PC-3 (cell line): ENCODE measurements at regions of chr6 and their contacts with region 1.

Region 1: DNA sequence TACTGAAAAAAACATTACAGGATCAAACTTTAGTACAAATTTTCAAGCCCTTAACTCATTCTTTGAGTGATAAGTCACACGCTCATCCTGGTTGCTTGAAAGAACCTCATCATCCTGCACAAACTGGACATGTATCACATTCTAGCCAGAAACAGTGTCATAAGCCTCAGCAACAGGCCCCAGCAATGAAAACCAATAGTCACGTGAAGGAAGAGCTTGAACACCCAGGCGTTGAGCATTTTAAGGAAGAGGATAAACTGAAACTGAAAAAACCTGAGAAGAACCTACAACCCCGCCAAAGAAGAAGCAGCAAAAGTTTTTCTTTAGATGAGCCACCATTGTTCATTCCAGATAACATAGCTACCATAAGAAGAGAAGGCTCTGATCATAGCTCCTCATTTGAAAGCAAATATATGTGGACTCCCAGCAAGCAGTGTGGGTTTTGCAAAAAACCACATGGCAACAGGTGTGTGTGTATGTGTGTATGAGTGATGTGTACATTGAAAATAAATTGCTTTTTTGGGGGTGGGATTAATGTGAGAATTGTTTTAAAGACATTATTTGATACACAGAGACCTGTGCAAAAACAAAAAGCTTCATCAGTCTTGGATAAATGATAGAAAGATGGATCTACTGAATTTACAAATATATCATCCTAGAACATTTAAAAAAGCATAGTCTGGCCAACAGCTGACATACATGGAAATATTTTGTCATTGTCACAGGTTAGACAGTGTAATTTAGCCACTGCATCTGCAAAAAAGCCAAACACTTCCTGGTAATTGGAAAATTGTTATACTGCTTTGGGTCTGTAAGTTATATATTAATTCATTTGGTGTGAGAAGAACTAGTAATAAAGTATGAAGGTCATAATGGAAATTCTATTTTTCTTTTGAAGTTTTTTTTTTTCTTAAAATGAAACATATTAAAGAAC is 50.1 kb downstream of the PHF3 start:
- DNase-seq: no peak
- ATAC-seq: no peak
- H3K4me3 ChIP-seq: no peak overlapping the region
- H3K27ac ChIP-seq: no peak overlapping the region
- H3K4me1 ChIP-seq: no peaks in the 10 kb centered on the region
- H3K27me3 ChIP-seq: no peaks in the 10 kb centered on the region
- CTCF ChIP-seq: no peak

Region 2: DNA sequence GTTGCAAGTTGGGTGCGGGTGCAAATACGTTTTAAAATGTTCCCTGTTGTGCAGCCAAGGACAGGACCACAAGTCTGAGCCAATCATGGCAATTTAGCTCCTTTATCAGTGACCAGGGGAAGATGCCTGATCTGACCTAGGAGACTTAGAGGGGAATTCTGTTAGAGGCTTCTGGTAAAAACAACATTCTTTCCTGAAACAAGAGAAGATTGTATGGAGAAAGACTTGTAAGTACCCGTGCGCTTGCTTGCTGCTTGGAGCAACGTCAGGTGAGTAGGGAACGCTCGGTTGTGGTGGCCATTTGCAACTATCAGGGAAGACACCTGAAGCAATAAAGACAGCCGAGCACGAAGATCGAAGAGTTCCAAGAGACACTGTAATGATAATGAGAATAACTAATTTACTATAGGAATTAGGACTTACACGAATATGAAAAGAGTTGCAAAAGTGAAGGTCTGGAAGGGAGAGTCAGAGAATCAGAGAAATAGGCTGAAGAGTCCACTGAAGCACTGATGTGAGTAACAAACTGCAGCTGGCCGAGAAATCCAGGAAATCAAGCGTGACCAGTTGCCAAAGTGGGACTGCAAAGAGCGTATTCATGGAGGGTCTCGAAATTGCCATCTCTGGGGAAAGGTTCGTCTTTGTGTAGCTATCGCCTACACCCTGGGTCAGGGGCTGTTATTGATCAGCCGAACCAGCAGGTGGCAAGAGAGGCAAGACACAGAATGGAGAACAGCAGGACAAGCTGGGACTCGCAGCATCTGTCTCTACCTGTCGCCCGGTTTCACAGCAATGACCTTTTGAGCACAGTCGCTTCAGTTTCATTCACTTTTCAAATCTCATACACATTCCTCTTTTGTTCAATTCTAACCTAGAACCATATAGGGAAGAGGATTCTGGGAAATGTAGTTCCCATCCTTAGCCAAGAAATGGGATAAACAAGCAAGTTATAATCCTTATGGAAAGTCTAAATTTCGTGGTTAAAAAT is 87.4 kb before region 1 on chr6:
- CTCF ChIA-PET with region 1: no interaction called
- POLR2A ChIA-PET with region 1: no interaction called
- intact Hi-C with region 1: no loop called
- DNase-seq: peak; percentile 65
- ATAC-seq: peak; percentile 95
- H3K4me3 ChIP-seq: peak overlapping the region; percentile 87
- H3K27ac ChIP-seq: no peak overlapping the region
- H3K4me1 ChIP-seq: peaks cover 6% of the 10 kb centered on the region; the same call in 1 of the 2 replicates
- H3K27me3 ChIP-seq: no peaks in the 10 kb centered on the region
- CTCF ChIP-seq: peak; percentile 80

Region 3: GRCh38 chr6:63643862-63644261 is 41.9 kb before region 1 on chr6:
- CTCF ChIA-PET with region 1: no interaction called
- POLR2A ChIA-PET with region 1: no interaction called
- intact Hi-C with region 1: loop called (anchors 5 kb)
- DNase-seq: no peak
- ATAC-seq: no peak
- H3K4me3 ChIP-seq: no peak overlapping the region
- H3K27ac ChIP-seq: no peak overlapping the region
- H3K4me1 ChIP-seq: peaks cover 18% of the 10 kb centered on the region
- H3K27me3 ChIP-seq: no peaks in the 10 kb centered on the region
- CTCF ChIP-seq: no peak

Region 4: GRCh38 chr6:63732336-63732735 is 46.6 kb after region 1 on chr6:
- CTCF ChIA-PET with region 1: no interaction called
- POLR2A ChIA-PET with region 1: no interaction called
- intact Hi-C with region 1: loop called (anchors 2 kb)
- DNase-seq: peak; percentile 81
- ATAC-seq: peak; percentile 75
- H3K4me3 ChIP-seq: no peak overlapping the region
- H3K27ac ChIP-seq: peak overlapping the region; percentile 86
- H3K4me1 ChIP-seq: peaks cover 46% of the 10 kb centered on the region
- H3K27me3 ChIP-seq: no peaks in the 10 kb centered on the region
- CTCF ChIP-seq: no peak